Heart left ventricle (tissue), 16 donors: ENCODE measurements at regions of chr20 and their contacts with region 1.

Region 1: DNA sequence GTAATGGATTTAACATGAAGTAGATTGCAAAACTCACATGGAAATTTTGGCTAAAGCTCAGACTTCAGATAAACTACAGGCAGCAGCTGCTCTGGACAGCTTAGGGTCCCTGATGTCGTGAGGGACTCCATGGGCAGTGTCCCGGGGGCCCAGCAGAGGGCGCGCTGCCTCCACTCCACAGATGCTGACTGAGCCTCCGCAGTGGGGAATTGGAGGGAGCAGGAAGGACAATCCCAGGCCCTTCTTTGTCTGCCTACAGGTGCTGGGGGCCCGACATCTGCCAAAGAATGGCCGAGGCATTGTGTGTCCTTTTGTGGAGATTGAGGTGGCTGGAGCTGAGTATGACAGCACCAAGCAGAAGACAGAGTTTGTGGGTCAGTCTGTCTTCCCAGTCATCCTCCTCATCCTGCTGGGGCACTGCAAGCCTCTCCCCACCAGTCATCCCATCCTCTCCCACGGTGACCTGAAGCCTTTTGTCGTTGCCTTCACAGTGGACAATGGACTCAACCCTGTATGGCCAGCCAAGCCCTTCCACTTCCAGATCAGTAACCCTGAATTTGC is 35.9 kb downstream of the PLCG1 start:
- DNase-seq: peak; percentile 85 to 92 (median 87)
- ATAC-seq: peak; percentile 66 to 83 (median 80)
- H3K4me3 ChIP-seq: no peak overlapping the region
- H3K27ac ChIP-seq: peak overlapping the region; percentile 68 to 93 (median 84)
- H3K4me1 ChIP-seq: peaks cover 14 to 71% (median 54%) of the 10 kb centered on the region in 12 donors
- H3K27me3 ChIP-seq: no peaks in the 10 kb centered on the region
- CTCF ChIP-seq: peak; percentile 96 to 99 (median 98)
- POLR2A ChIP-seq: no peak

Region 2: GRCh38 chr20:41232973-41233926 is 60.0 kb after region 1 on chr20:
- intact Hi-C with region 1: loop called (anchors 1 to 2 kb)
- DNase-seq: no peak
- ATAC-seq: peak in 3 of 4 donors; percentile 35 to 62 (median 55)
- H3K4me3 ChIP-seq: peak overlapping the region in 3 of 12 donors; percentile 18 to 33 (median 31)
- H3K27ac ChIP-seq: peak overlapping the region; percentile 41 to 83 (median 76)
- H3K4me1 ChIP-seq: peaks cover 15 to 68% (median 50%) of the 10 kb centered on the region in 12 donors
- H3K27me3 ChIP-seq: no peaks in the 10 kb centered on the region
- CTCF ChIP-seq: no peak
- POLR2A ChIP-seq: no peak

Region 3: GRCh38 chr20:41411391-41411847 is 238.2 kb after region 1 on chr20:
- intact Hi-C with region 1: loop called in 9 of 10 experiments (anchors 2 to 10 kb)
- DNase-seq: no peak
- ATAC-seq: peak; percentile 69 to 87 (median 78)
- H3K4me3 ChIP-seq: no peak overlapping the region
- H3K27ac ChIP-seq: peak overlapping the region; percentile 67 to 89 (median 73)
- H3K4me1 ChIP-seq: peaks cover 3 to 55% (median 28%) of the 10 kb centered on the region in 12 donors
- H3K27me3 ChIP-seq: no peaks in the 10 kb centered on the region
- CTCF ChIP-seq: peak; percentile 30 to 68 (median 58)
- POLR2A ChIP-seq: no peak